PC-3 (cell line): ENCODE measurements at regions of chr6 and their contacts with region 1.

Region 1: GRCh38 chr6:81465859-81466258 is 286.6 kb downstream of the TENT5A start:
- DNase-seq: peak; percentile 49
- ATAC-seq: no peak
- H3K4me3 ChIP-seq: no peak overlapping the region
- H3K27ac ChIP-seq: no peak overlapping the region
- H3K4me1 ChIP-seq: no peaks in the 10 kb centered on the region
- H3K27me3 ChIP-seq: no peaks in the 10 kb centered on the region
- CTCF ChIP-seq: peak; percentile 66

Region 2: DNA sequence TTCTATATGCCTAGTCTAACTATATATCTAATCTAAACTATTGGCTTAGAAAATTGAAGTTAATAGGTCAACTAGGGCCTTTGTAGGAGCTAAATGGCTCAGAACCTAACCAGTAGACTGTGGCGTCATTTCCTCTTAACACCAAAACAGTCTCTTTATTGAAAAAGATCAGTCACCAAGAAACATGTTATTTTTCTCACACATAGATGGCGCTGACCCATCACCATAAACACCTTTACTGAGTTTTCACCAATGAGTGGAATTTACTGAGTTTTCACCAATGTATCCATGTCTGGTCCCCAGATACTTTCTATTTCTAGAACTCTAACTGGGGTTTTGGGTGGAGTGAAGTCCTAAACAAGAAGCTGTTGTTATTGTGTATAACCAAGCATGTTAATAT is 723.4 kb before region 1 on chr6:
- CTCF ChIA-PET with region 1: no interaction called
- POLR2A ChIA-PET with region 1: no interaction called
- intact Hi-C with region 1: loop called (anchors 10 kb)
- DNase-seq: peak; percentile 45
- ATAC-seq: peak; percentile 49
- H3K4me3 ChIP-seq: no peak overlapping the region
- H3K27ac ChIP-seq: no peak overlapping the region
- H3K4me1 ChIP-seq: no peaks in the 10 kb centered on the region
- H3K27me3 ChIP-seq: no peaks in the 10 kb centered on the region
- CTCF ChIP-seq: peak; percentile 56

Region 3: GRCh38 chr6:81241126-81242041 is 224.5 kb before region 1 on chr6:
- CTCF ChIA-PET with region 1: no interaction called
- POLR2A ChIA-PET with region 1: no interaction called
- intact Hi-C with region 1: loop called (anchors 5 kb)
- DNase-seq: peak; percentile 52
- ATAC-seq: peak; percentile 37
- H3K4me3 ChIP-seq: no peak overlapping the region
- H3K27ac ChIP-seq: no peak overlapping the region
- H3K4me1 ChIP-seq: no peaks in the 10 kb centered on the region
- H3K27me3 ChIP-seq: no peaks in the 10 kb centered on the region
- CTCF ChIP-seq: peak; percentile 62

Region 4: GRCh38 chr6:81981812-81982211 is 516.0 kb after region 1 on chr6:
- CTCF ChIA-PET with region 1: no interaction called
- POLR2A ChIA-PET with region 1: no interaction called
- intact Hi-C with region 1: loop called (anchors 10 kb)
- DNase-seq: peak; percentile 83
- ATAC-seq: peak; percentile 82
- H3K4me3 ChIP-seq: peak overlapping the region; percentile 28; the same call in 1 of the 2 replicates
- H3K27ac ChIP-seq: peak overlapping the region; percentile 53
- H3K4me1 ChIP-seq: peaks cover 52% of the 10 kb centered on the region
- H3K27me3 ChIP-seq: no peaks in the 10 kb centered on the region
- CTCF ChIP-seq: no peak